Calu3 (cell line): ENCODE measurements at regions of chr5 and their contacts with region 1.

Region 1: DNA sequence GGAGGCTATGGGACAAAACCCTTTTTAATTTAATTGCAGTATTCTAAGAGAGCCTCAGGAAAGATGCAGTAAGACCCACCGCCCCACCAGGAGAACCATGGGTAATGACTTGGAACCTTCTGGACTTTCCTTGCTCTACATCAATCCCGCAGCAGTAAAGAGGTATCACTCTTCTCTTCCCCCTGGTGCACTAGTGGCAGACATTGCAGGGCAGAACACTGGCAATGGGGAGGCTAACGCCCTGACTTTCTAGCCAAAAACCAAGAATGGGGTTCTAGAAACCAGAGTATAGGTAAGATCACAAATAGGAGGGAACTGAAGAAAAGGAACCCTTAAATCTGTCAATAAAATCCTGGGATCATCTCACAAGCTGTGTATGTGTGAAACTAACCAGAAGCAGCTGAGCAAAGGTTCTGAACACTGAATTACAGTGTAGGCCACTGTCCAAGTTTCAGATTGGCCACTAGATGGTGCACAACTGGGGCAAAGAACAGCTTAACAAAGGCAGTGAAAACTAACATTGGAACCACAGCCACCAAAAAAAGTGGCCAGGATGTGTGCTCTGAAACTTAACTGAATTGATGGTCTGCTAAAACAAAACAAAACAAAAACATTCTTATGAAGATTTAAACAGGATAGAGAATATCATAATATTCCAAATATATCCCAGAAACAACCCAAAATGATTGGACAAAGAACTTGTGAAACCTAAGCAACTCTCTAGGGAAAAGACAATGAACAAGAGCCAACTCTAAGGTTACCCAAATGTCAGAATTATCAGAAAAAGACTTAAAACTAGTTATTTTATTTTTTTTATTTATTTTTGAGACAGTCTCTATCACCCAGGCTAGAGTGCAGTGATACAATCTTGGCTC is 6.6 kb upstream of the FAM151B start:
- DNase-seq: peak; percentile 62
- H3K4me3 Mint-ChIP-seq: no peak overlapping the region
- H3K27ac Mint-ChIP-seq: peak overlapping the region; percentile 58
- H3K4me1 Mint-ChIP-seq: peaks cover under 1% of the 10 kb centered on the region
- H3K27me3 Mint-ChIP-seq: no peaks in the 10 kb centered on the region
- CTCF ChIP-seq: peak; percentile 83

Region 2: DNA sequence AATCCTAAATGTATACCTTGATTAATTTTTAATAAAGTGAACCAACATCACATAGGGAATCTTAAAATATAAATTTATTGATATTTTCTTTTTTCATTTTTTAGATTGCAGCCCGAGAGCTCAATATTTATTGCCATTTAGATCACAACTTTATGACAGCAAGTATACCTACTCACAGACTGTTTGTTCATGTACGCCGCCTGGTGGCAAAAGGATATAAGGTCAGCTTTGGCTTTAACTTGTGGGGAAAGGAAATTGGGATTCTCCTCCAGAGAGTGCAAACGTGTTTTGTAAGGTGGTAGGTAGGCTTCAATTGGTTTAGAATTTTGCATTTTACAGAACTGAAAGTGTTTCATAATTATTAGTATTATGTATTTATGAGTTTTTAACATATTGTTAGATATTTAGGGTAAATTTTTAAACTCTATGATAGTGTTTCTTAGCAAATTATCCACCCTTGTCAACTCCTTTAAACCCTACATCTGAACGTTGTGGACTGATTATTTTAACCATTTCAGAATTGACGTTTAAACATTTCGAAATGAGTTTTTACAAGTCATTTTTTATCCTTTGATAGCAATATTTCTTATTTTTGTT is 191.0 kb after region 1 on chr5:
- CTCF ChIA-PET with region 1: interaction called, 17 read pairs
- intact Hi-C with region 1: loop called (anchors 1 kb)
- DNase-seq: peak; percentile 80
- H3K4me3 Mint-ChIP-seq: no peak overlapping the region
- H3K27ac Mint-ChIP-seq: no peak overlapping the region
- H3K4me1 Mint-ChIP-seq: no peaks in the 10 kb centered on the region
- H3K27me3 Mint-ChIP-seq: no peaks in the 10 kb centered on the region
- CTCF ChIP-seq: peak; percentile 80